ENCODE measurements at regions of chr7 and their contacts with region 1.

Region 1: GRCh38 chr7:85000735-85001350 is 186.0 kb downstream of the SEMA3D start:
- DNase-seq: no peak
- ATAC-seq: no peak
- H3K4me3 ChIP-seq: no peak overlapping the region
- H3K27ac ChIP-seq: no peak overlapping the region
- H3K4me1 ChIP-seq: peaks cover 0 to 5% (median 0%) of the 10 kb centered on the region in 9 donors
- H3K27me3 ChIP-seq: no peaks in the 10 kb centered on the region
- CTCF ChIP-seq: no peak

Region 2: GRCh38 chr7:84924341-84924740 is 76.5 kb before region 1 on chr7:
- intact Hi-C with region 1: loop called in 1 of 10 experiments (anchors 10 kb)
- DNase-seq: no peak
- ATAC-seq: no peak
- H3K4me3 ChIP-seq: no peak overlapping the region
- H3K27ac ChIP-seq: no peak overlapping the region
- H3K4me1 ChIP-seq: peaks cover 0 to 3% (median 0%) of the 10 kb centered on the region in 9 donors
- H3K27me3 ChIP-seq: no peaks in the 10 kb centered on the region
- CTCF ChIP-seq: no peak

Region 3: DNA sequence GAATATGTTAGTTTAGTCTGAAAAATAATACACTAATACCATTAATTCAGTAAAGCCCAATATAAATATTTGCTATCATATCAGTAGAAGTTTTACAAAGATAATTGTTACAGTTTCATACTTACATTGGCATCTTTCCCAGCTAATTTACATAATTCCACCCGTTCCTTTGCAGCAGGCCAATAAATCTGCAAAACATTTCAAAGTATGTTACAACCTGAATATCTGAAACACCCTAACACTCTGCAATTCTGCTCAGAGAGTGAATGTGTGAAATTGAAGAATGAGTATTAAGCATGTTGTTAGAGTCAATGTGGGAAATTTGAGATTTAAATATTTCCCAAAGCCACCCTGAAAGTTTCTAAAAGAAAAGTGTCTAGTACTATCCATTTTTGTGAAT is 80.5 kb after region 1 on chr7:
- intact Hi-C with region 1: no loop called
- DNase-seq: no peak
- ATAC-seq: no peak
- H3K4me3 ChIP-seq: no peak overlapping the region
- H3K27ac ChIP-seq: no peak overlapping the region
- H3K4me1 ChIP-seq: no peaks in the 10 kb centered on the region
- H3K27me3 ChIP-seq: peaks cover 0 to 4% (median 0%) of the 10 kb centered on the region in 7 donors
- CTCF ChIP-seq: no peak

Measured in heart right ventricle (tissue), 16 donors.